ENCODE measurements at regions of chr9 and their contacts with region 1.

Region 1: DNA sequence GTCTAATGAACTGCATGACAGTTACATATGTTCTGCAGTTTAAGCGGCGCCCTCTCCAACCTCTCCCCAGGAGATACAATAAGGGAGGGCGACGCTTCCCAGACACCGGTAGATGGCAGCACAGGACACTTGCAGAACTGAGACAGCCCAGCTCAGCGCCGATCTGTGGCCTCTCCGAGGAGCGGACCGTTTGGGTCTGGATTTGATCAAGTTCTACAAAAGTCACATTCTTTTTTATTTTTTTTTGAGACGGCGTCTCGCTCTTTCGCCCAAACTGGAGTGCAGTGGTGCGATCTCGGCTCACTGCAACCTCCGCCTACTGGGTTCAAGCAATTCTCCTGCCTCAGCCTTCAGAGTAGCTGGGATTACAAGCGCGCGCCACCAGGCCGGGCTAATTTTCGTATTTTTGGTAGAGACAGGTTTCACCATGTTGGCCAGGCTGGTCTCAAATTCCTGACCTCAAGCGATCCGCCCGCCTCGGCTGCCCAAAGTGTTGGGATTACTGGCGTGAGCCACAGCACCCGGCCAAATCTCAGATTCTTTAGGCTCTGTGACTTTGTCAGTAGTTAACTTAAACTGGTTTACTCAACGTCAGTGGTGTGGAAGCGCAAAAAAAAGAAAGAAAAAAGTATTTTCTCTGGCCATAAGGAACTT is 1.4 kb upstream of the ATOSB start:
- DNase-seq: peak; percentile 88 to 94
- H3K4me3 ChIP-seq: peak overlapping the region; percentile 45 to 55
- H3K27ac ChIP-seq: peak overlapping the region; percentile 88 to 89
- H3K4me1 ChIP-seq: no peaks in the 10 kb centered on the region
- H3K27me3 ChIP-seq: no peaks in the 10 kb centered on the region
- CTCF ChIP-seq: peak; percentile 94 to 97 (median 96)
- POLR2A ChIP-seq: peak in 1 of 2 donors; percentile 8

Region 2: GRCh38 chr9:34809504-34810186 is 307.4 kb before region 1 on chr9:
- intact Hi-C with region 1: no loop called
- DNase-seq: no peak
- H3K4me3 ChIP-seq: no peak overlapping the region
- H3K27ac ChIP-seq: no peak overlapping the region
- H3K4me1 ChIP-seq: peaks cover 0 to 6% of the 10 kb centered on the region in 2 donors
- H3K27me3 ChIP-seq: no peaks in the 10 kb centered on the region
- CTCF ChIP-seq: no peak
- POLR2A ChIP-seq: no peak

Region 3: GRCh38 chr9:35258676-35259474 is 141.8 kb after region 1 on chr9:
- intact Hi-C with region 1: loop called (anchors 5 kb)
- DNase-seq: peak; percentile 70 to 74
- H3K4me3 ChIP-seq: no peak overlapping the region
- H3K27ac ChIP-seq: no peak overlapping the region
- H3K4me1 ChIP-seq: no peaks in the 10 kb centered on the region
- H3K27me3 ChIP-seq: no peaks in the 10 kb centered on the region
- CTCF ChIP-seq: peak; percentile 42 to 74 (median 68)
- POLR2A ChIP-seq: no peak

Region 4: GRCh38 chr9:35476596-35476995 is 359.6 kb after region 1 on chr9:
- intact Hi-C with region 1: loop called (anchors 5 kb)
- DNase-seq: no peak
- H3K4me3 ChIP-seq: no peak overlapping the region
- H3K27ac ChIP-seq: no peak overlapping the region
- H3K4me1 ChIP-seq: no peaks in the 10 kb centered on the region
- H3K27me3 ChIP-seq: no peaks in the 10 kb centered on the region
- CTCF ChIP-seq: no peak
- POLR2A ChIP-seq: no peak

Region 5: GRCh38 chr9:35814841-35815543 is 698.0 kb after region 1 on chr9 and contains the start of gene HINT2:
- intact Hi-C with region 1: loop called (anchors 10 kb)
- DNase-seq: peak; percentile 94 to 98
- H3K4me3 ChIP-seq: peak within 1 kb of the TSS; percentile 78 to 80
- H3K27ac ChIP-seq: peak within 1 kb of the TSS; percentile 96 to 98
- H3K4me1 ChIP-seq: peaks cover 0 to 6% of the 10 kb centered on the region in 2 donors
- H3K27me3 ChIP-seq: no peaks in the 10 kb centered on the region
- CTCF ChIP-seq: peak in 1 of 4 experiments; percentile 5
- POLR2A ChIP-seq: peak; percentile 91 to 95
- total RNA-seq, gene HINT2: 11.3 to 38.2 (median 31.5) TPM in 3 of 4 donors, not detected in the other